ENCODE measurements at regions of chr12 and their contacts with region 1.

Region 1: DNA sequence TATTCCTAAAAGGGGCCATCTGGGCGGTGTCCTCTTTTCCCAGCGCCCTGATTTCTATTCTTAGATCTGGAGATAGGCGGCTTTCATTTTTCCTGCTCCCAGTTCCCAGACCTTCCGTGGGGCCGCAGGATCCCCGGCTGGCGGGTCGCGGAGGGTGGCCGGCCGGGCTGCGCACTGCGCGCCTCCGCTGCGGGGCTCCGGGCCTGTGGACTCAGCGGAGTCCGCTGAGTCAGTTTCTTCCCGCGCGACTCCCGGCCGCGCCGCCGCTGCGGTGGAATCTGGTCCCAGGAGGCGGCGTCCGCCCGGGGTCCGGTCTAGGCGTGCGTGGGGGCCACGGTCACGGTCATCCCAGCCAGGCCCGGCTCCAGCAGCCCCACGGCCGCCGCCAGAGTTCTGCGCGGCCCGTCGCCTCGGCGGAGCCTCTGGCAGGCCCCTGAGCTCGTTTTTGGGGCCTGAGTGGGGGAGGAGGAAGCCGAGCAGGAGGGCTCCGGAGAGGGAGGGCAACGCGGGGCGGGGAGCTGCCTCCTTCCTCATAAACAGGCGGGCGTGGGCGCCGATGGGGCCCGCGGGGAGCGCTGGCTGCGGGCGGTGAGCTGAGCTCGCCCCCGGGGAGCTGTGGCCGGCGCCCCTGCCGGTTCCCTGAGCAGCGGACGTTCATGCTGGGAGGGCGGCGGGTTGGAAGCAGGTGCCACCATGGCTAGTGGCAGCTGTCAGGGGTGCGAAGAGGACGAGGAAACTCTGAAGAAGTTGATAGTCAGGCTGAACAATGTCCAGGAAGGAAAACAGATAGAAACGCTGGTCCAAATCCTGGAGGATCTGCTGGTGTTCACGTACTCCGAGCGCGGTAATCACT is at the start of gene LRRK2:
- DNase-seq: peak; percentile 81 to 95 (median 82)
- H3K4me3 ChIP-seq: peak within 1 kb of the TSS; percentile 78 to 90 (median 89)
- H3K27ac ChIP-seq: peak within 1 kb of the TSS; percentile 93 to 94
- H3K4me1 ChIP-seq: peaks cover 0 to 11% (median 0%) of the 10 kb centered on the region in 3 donors
- H3K27me3 ChIP-seq: no peaks in the 10 kb centered on the region
- CTCF ChIP-seq: no peak
- total RNA-seq, gene LRRK2: 110 TPM

Region 2: GRCh38 chr12:40045656-40046055 is 179.0 kb before region 1 on chr12:
- intact Hi-C with region 1: no loop called
- DNase-seq: no peak
- H3K4me3 ChIP-seq: no peak overlapping the region
- H3K27ac ChIP-seq: no peak overlapping the region
- H3K4me1 ChIP-seq: no peaks in the 10 kb centered on the region
- H3K27me3 ChIP-seq: no peaks in the 10 kb centered on the region
- CTCF ChIP-seq: no peak

Region 3: GRCh38 chr12:40152783-40153383 is 71.8 kb before region 1 on chr12:
- intact Hi-C with region 1: loop called (anchors 10 kb)
- DNase-seq: peak in 4 of 5 donors; percentile 52 to 78 (median 60)
- H3K4me3 ChIP-seq: no peak overlapping the region
- H3K27ac ChIP-seq: no peak overlapping the region
- H3K4me1 ChIP-seq: no peaks in the 10 kb centered on the region
- H3K27me3 ChIP-seq: no peaks in the 10 kb centered on the region
- CTCF ChIP-seq: peak; percentile 80